H1 (cell line): ENCODE measurements at regions of chr1 and their contacts with region 1.

Region 1: DNA sequence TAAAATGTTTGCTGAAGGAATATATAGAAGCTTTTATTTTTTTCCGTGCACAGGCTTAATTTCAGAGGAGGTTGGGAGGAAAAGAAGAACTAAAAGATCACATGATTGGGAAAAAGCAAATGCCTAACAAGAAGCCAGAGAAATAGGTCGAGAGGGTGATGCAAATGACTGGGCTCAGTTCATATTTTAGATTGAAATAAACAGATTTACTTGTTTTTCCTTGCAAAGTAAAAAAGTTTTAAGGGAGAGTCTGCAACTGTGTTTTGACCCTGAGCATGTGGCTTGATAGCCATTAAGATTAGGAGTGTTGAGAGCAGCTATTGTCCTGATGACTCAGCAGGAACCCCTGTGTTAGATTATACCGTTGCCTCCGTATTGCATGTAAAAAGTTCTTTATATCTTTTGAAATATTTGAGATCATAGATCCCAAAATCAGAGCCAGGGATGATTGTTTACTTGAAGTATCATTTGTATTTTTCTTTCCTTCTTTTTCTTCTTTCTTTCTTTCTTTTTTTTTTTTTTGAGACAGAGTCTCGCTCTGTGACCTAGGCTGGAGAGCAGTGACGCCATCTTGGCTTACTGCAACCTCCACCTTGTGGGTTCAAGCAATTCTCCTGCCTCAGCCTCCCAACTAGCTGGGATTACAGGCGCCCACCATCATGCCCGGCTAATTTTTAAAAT is 20.2 kb downstream of the CLIC4 start:
- DNase-seq: peak in 1 of 2 experiments; percentile 23
- H3K4me3 ChIP-seq: no peak overlapping the region
- H3K27ac ChIP-seq: no peak overlapping the region
- H3K4me1 ChIP-seq: peaks cover 0 to 7% (median under 1%) of the 10 kb centered on the region in 4 experiments; a peak in 4 of 7 replicates
- H3K27me3 ChIP-seq: no peaks in the 10 kb centered on the region
- CTCF ChIP-seq: no peak
- EP300 ChIP-seq: no peak
- POLR2A ChIP-seq: no peak
- RAD21 ChIP-seq: no peak

Region 2: GRCh38 chr1:24754229-24754628 is 11.2 kb before region 1 on chr1:
- CTCF ChIA-PET with region 1: interaction called, 3 read pairs
- POLR2A ChIA-PET with region 1: interaction called, 11 read pairs
- DNase-seq: peak in 1 of 2 experiments; percentile 33
- H3K4me3 ChIP-seq: no peak overlapping the region
- H3K27ac ChIP-seq: no peak overlapping the region
- H3K4me1 ChIP-seq: peaks cover 0 to 7% (median 0%) of the 10 kb centered on the region in 4 experiments; a peak in 2 of 7 replicates
- H3K27me3 ChIP-seq: no peaks in the 10 kb centered on the region
- CTCF ChIP-seq: no peak
- EP300 ChIP-seq: no peak
- POLR2A ChIP-seq: no peak
- RAD21 ChIP-seq: no peak

Region 3: GRCh38 chr1:24793447-24794131 is 28.1 kb after region 1 on chr1:
- CTCF ChIA-PET with region 1: no interaction called
- POLR2A ChIA-PET with region 1: no interaction called
- DNase-seq: no peak
- H3K4me3 ChIP-seq: no peak overlapping the region
- H3K27ac ChIP-seq: no peak overlapping the region
- H3K4me1 ChIP-seq: no peaks in the 10 kb centered on the region
- H3K27me3 ChIP-seq: no peaks in the 10 kb centered on the region
- CTCF ChIP-seq: no peak
- EP300 ChIP-seq: no peak
- POLR2A ChIP-seq: no peak
- RAD21 ChIP-seq: no peak